SK-MEL-5 (cell line): ENCODE measurements at regions of chr7 and their contacts with region 1.

Region 1: DNA sequence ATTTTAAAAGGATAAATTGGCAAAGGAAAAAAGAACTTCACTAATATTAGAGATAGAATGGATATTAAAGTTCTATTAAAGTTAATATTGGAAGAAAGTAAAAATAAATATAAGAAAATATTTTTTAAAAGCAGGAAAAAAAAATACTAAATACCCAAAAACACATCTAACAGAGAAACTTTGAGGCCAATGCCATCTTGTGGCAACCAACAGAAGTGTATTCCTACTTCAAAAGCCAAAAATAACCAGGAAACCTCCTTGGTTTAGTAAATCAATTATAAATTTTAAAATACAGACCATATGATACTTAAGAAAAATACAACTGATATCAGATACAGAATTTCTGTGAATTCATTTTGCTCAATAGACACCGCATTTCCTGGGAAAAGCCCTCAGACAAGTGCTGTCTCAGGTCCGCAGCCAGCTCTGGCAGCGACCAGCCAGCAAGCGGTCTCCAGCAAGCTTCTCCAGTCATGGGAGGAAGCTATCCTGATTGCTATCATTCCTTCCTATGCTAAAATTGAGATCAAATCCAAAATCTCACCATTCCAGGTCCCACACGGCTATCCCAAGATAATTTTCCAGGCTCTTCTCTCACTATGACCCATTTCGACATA is 65.3 kb downstream of the LMBR1 start:
- DNase-seq: peak; percentile 55

Region 2: GRCh38 chr7:156493942-156494341 is 333.8 kb before region 1 on chr7:
- in situ Hi-C with region 1: loop called (anchors 10 kb)
- DNase-seq: no peak